Activated T-helper 1 cell treated with anti-CD3 and anti-CD28 coated beads, Interleukin-12 subunit alpha, Interleukin-12 subunit beta, Interleukin-2, Interleukin-4 antibody, amounts not matched to agents 30 ng/mL and 10 ng/mL and 1 ng/mL, durations not matched to agents 14 hours and 24 hours and 36 hours (primary cell): ENCODE measurements at regions of chr20 and their contacts with region 1.

Region 1: GRCh38 chr20:41028348-41029148 is at the start of gene TOP1:
- DNase-seq: peak; percentile 99
- H3K4me3 Mint-ChIP-seq: peak within 1 kb of the TSS; percentile 94
- H3K27ac Mint-ChIP-seq: peak within 1 kb of the TSS; percentile 94
- H3K4me1 Mint-ChIP-seq: peaks cover 49% of the 10 kb centered on the region
- H3K27me3 Mint-ChIP-seq: no peaks in the 10 kb centered on the region
- total RNA-seq, gene TOP1: 120 and 123 TPM in 2 replicates

Region 2: GRCh38 chr20:40980106-40980827 is 48.3 kb before region 1 on chr20:
- intact Hi-C with region 1: no loop called
- DNase-seq: no peak
- H3K4me3 Mint-ChIP-seq: no peak overlapping the region
- H3K27ac Mint-ChIP-seq: no peak overlapping the region
- H3K4me1 Mint-ChIP-seq: no peaks in the 10 kb centered on the region
- H3K27me3 Mint-ChIP-seq: peaks cover 21% of the 10 kb centered on the region

Region 3: GRCh38 chr20:41003143-41003883 is 25.2 kb before region 1 on chr20:
- intact Hi-C with region 1: loop called (anchors 1 kb)
- DNase-seq: peak; percentile 56
- H3K4me3 Mint-ChIP-seq: peak overlapping the region; percentile 66
- H3K27ac Mint-ChIP-seq: peak overlapping the region; percentile 94
- H3K4me1 Mint-ChIP-seq: peaks cover 42% of the 10 kb centered on the region
- H3K27me3 Mint-ChIP-seq: no peaks in the 10 kb centered on the region

Region 4: GRCh38 chr20:41047975-41048305 is 19.4 kb after region 1 on chr20:
- intact Hi-C with region 1: loop called (anchors 1 kb)
- DNase-seq: no peak
- H3K4me3 Mint-ChIP-seq: peak overlapping the region; percentile 81
- H3K27ac Mint-ChIP-seq: peak overlapping the region; percentile 80
- H3K4me1 Mint-ChIP-seq: peaks cover 91% of the 10 kb centered on the region
- H3K27me3 Mint-ChIP-seq: no peaks in the 10 kb centered on the region

Region 5: DNA sequence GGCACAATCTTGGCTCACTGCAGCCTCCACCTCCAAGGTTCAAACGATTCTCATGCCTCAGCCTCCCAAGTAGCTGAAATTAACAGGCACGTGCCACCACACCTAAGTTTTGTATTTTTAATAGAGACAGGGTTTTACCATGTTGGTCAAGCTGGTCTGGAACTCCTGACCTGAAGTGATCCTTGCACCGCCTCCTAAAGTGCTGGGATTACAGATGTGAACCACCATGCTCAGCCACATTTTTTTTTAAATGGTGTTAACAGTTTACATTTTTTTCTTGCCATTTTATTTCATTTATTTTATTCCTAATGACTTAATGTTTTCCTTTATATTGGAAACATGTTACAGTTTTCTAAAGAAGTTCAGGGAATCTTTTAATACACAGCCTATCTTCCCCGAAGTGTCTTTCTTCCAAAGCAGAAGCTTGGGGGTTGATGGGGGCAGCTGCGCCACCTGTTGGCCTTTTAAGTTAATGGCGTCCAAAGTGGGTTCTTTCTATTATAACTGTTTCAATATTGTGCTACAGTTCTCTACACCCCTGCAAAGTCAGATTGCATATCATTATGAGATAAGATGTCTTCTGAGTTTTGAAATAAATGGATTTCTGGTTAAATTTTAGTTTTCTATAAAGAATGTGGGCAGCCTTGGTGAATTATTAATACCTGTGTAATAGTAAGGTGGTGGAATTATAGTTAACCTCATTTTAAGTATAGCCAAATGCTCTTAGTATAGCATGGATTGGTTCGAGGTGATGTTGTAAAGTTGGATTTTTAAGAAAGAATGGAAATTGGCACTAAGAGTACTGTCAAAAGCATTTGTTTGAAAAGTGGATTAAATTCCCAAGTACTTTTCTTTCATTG is 66.8 kb after region 1 on chr20:
- intact Hi-C with region 1: loop called (anchors 1 kb)
- DNase-seq: peak; percentile 34
- H3K4me3 Mint-ChIP-seq: no peak overlapping the region
- H3K27ac Mint-ChIP-seq: no peak overlapping the region
- H3K4me1 Mint-ChIP-seq: peaks cover 13% of the 10 kb centered on the region
- H3K27me3 Mint-ChIP-seq: no peaks in the 10 kb centered on the region

Region 6: GRCh38 chr20:41131594-41132387 is 103.2 kb after region 1 on chr20:
- intact Hi-C with region 1: no loop called
- DNase-seq: no peak
- H3K4me3 Mint-ChIP-seq: peak overlapping the region; percentile 12
- H3K27ac Mint-ChIP-seq: peak overlapping the region; percentile 67
- H3K4me1 Mint-ChIP-seq: peaks cover 47% of the 10 kb centered on the region
- H3K27me3 Mint-ChIP-seq: no peaks in the 10 kb centered on the region

Region 7: GRCh38 chr20:41339507-41340326 is 311.2 kb after region 1 on chr20:
- intact Hi-C with region 1: loop called (anchors 2 kb)
- DNase-seq: peak; percentile 78
- H3K4me3 Mint-ChIP-seq: peak overlapping the region; percentile 86
- H3K27ac Mint-ChIP-seq: no peak overlapping the region
- H3K4me1 Mint-ChIP-seq: peaks cover 13% of the 10 kb centered on the region
- H3K27me3 Mint-ChIP-seq: peaks cover 14% of the 10 kb centered on the region